Activated naive CD4-positive, alpha-beta T cell treated with anti-CD3 and anti-CD28 coated beads for 36 hours (primary cell): ENCODE measurements at regions of chr2 and their contacts with region 1.

Region 1: GRCh38 chr2:73212448-73213176 is 1.4 kb upstream of the SMYD5 start:
- DNase-seq: peak; percentile 85
- H3K4me3 Mint-ChIP-seq: no peak overlapping the region
- H3K27ac Mint-ChIP-seq: no peak overlapping the region
- H3K4me1 Mint-ChIP-seq: peaks cover 29% of the 10 kb centered on the region
- H3K27me3 Mint-ChIP-seq: peaks cover 3% of the 10 kb centered on the region

Region 2: DNA sequence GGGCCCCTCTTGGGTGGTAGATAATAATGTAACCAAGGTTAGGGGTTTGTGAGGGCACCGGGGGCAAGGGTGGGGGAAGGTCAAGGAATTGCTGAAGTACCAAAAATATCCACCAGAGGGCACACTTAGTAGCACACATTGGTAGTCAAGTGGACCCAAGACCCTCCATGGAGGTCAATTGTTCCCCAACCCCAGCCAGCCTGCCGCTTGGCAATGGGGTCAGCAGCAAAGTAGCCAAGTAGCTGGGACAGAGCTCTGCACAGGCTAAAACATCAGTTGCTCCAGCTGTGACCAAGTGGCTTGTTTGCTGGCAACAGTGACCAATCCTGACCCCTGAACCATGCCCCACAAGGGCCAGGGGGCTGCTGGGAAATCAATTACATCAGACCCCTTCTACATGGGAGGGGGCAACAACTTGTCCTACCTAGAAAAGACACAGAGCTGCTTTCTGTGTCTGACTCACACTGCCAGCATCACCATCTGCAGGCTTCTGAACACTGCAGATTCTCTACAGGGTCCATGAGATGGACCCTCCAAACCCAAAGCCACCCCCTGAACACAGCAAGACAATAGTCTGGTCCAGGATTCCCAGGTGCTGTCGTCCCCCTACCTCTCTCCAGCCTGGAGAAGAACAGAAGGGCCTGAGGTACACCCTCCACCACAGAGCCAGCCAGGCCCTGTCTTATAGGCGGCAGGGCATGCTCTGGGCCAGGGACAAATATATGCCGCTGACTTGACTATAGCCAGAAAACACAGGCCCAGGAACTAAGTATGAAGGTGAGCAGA is 219.3 kb before region 1 on chr2:
- CTCF ChIA-PET with region 1: interaction called, 6 read pairs
- intact Hi-C with region 1: loop called (anchors 1 kb)
- DNase-seq: peak; percentile 42
- H3K4me3 Mint-ChIP-seq: no peak overlapping the region
- H3K27ac Mint-ChIP-seq: no peak overlapping the region
- H3K4me1 Mint-ChIP-seq: no peaks in the 10 kb centered on the region
- H3K27me3 Mint-ChIP-seq: no peaks in the 10 kb centered on the region

Region 3: DNA sequence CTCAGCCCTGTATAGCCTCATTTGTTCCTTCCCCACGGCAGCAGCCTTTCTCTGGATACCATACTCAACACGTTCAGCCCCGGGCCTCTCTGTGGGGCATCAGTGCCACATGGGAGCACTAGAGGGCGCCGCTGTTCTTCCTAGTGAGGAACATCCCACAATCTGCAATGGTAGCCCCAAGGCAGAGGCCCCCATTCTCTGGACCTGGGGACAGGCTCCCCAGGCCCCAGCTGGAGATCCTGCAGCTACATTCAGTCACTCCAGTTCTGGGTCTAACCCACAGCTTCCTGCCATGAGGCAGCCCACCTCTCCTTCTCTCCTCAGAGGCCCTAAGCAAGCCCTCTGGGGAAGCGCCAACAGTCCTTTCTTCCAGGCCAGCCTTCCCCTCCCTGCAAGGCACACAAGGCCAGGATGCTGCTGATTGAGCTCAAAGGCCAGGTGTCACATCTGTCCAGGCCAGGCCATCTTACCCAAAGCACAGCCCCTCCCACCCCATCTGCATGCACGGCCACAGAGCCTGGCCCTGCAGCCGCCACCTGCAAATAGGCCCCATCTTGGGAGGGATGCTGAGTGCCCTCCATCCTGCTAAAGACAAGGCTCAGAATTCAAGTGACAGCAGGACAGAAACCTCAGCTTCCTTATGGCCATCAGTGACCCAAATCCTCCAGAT is 126.8 kb before region 1 on chr2:
- CTCF ChIA-PET with region 1: interaction called, 17 read pairs
- intact Hi-C with region 1: loop called (anchors 1 kb)
- DNase-seq: peak; percentile 90
- H3K4me3 Mint-ChIP-seq: no peak overlapping the region
- H3K27ac Mint-ChIP-seq: no peak overlapping the region
- H3K4me1 Mint-ChIP-seq: no peaks in the 10 kb centered on the region
- H3K27me3 Mint-ChIP-seq: no peaks in the 10 kb centered on the region

Region 4: GRCh38 chr2:73163483-73164367 is 48.9 kb before region 1 on chr2:
- CTCF ChIA-PET with region 1: interaction called, 4 read pairs
- intact Hi-C with region 1: loop called (anchors 1 kb)
- DNase-seq: peak; percentile 82
- H3K4me3 Mint-ChIP-seq: no peak overlapping the region
- H3K27ac Mint-ChIP-seq: no peak overlapping the region
- H3K4me1 Mint-ChIP-seq: no peaks in the 10 kb centered on the region
- H3K27me3 Mint-ChIP-seq: peaks cover 2% of the 10 kb centered on the region

Region 5: GRCh38 chr2:73284296-73285158 is 71.9 kb after region 1 on chr2 and contains the start of gene FBXO41:
- CTCF ChIA-PET with region 1: interaction called, 8 read pairs
- intact Hi-C with region 1: loop called (anchors 1 kb)
- DNase-seq: peak; percentile 65
- H3K4me3 Mint-ChIP-seq: peak within 1 kb of the TSS; percentile 80
- H3K27ac Mint-ChIP-seq: peak within 1 kb of the TSS; percentile 53
- H3K4me1 Mint-ChIP-seq: peaks cover 11% of the 10 kb centered on the region
- H3K27me3 Mint-ChIP-seq: peaks cover 14% of the 10 kb centered on the region
- total RNA-seq, gene FBXO41: 11.0 to 11.8 TPM

Region 6: DNA sequence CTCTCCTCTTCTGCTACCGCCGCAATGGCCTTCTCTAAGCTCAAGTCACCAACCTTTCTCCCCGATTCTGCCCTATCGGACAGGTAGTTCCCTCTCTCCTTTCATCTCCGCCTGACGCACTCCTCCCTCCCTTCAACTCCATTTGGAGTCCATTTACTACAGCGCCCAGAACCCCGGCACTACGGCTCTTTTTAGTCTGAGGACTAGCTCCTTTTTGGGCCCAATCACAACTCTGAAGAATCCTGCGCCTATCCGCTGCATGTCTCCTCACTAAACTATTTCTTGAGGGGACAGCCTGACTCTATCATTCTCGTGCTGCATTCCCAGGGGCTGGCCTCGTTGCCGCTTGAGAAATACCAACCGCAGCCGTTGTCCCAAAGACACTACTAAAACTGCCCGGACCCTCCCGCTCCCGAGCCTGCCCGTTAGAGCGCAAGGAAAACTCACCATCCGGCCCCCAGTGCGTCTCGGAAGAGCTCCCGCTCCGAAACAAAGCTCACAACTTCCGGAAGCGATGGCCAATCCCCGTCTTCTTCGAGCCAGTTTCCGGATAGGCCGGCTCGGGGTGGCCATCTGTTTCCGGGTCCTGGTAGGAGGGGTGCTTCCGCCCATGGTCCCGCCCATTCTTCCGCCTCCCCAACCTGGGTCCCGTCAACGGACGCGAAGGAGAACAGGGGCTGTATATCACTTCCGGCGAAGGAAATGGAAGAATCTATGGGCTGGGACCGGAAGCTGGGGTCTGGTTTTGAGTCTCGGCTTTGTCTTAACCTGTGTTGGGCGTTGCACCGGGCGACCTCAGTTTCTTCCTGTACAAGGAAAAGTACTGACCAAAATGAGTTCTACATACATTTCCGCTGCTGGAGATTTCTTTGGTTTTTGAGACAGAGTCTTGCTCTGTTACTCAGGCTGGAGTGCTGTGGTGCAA is 524.5 kb after region 1 on chr2 and contains the start of gene TPRKB:
- CTCF ChIA-PET with region 1: no interaction called
- intact Hi-C with region 1: loop called (anchors 1 kb)
- DNase-seq: peak; percentile 99
- H3K4me3 Mint-ChIP-seq: peak within 1 kb of the TSS; percentile 88
- H3K27ac Mint-ChIP-seq: peak within 1 kb of the TSS; percentile 76
- H3K4me1 Mint-ChIP-seq: peaks cover 15% of the 10 kb centered on the region
- H3K27me3 Mint-ChIP-seq: no peaks in the 10 kb centered on the region
- total RNA-seq, gene TPRKB: 30.5 to 32.5 TPM